ENCODE measurements at regions of chr11 and their contacts with region 1.

Region 1: GRCh38 chr11:30855383-30856006 is 269.3 kb upstream of the MPPED2 start:
- DNase-seq: peak; percentile 2
- ATAC-seq: no peak
- H3K4me3 ChIP-seq: no peak overlapping the region
- H3K27ac ChIP-seq: no peak overlapping the region
- H3K4me1 ChIP-seq: no peaks in the 10 kb centered on the region
- H3K27me3 ChIP-seq: no peaks in the 10 kb centered on the region
- CTCF ChIP-seq: peak; percentile 23
- EP300 ChIP-seq: no peak
- POLR2A ChIP-seq: no peak
- RAD21 ChIP-seq: no peak

Region 2: GRCh38 chr11:30346068-30346688 is 509.3 kb before region 1 on chr11:
- CTCF ChIA-PET with region 1: interaction called, 12 read pairs
- POLR2A ChIA-PET with region 1: no interaction called
- in situ Hi-C with region 1: loop called (anchors 10 kb)
- intact Hi-C with region 1: no loop called
- DNase-seq: peak; percentile 52
- ATAC-seq: peak; percentile 69
- H3K4me3 ChIP-seq: no peak overlapping the region
- H3K27ac ChIP-seq: no peak overlapping the region
- H3K4me1 ChIP-seq: no peaks in the 10 kb centered on the region
- H3K27me3 ChIP-seq: peaks cover 0 to 2% of the 10 kb centered on the region in 2 experiments; a peak in 1 of 5 replicates
- CTCF ChIP-seq: peak; percentile 60
- EP300 ChIP-seq: no peak
- POLR2A ChIP-seq: no peak
- RAD21 ChIP-seq: 0 out of 2 replicates have a peak, but pooled peaks have one; percentile 17

Region 3: DNA sequence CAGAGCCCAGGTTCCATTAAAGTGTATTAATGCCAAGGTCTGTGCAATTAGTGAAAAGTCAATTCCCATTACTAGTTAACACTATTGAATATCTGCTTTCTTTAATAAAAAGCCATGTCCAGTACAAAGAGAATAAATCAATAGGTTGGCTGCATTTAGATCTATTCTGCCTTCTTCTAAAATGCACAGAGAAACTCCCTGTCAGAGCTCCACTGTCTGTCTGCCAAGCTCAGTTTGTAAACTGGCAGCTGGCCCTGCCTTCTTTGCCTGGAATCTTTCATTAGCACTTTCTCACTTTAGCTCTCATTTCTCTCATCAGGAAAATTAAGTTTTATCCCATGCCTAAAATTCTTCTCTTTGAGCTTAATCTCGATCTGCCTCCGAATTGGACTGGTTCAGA is 497.0 kb before region 1 on chr11:
- CTCF ChIA-PET with region 1: no interaction called
- POLR2A ChIA-PET with region 1: no interaction called
- in situ Hi-C with region 1: loop called (anchors 10 kb)
- intact Hi-C with region 1: no loop called
- DNase-seq: no peak
- ATAC-seq: no peak
- H3K4me3 ChIP-seq: no peak overlapping the region
- H3K27ac ChIP-seq: no peak overlapping the region
- H3K4me1 ChIP-seq: no peaks in the 10 kb centered on the region
- H3K27me3 ChIP-seq: no peaks in the 10 kb centered on the region
- CTCF ChIP-seq: no peak
- EP300 ChIP-seq: no peak
- POLR2A ChIP-seq: no peak
- RAD21 ChIP-seq: no peak

Region 4: GRCh38 chr11:30586251-30587144 is 269.0 kb before region 1 on chr11 and contains the start of gene MPPED2:
- CTCF ChIA-PET with region 1: no interaction called
- POLR2A ChIA-PET with region 1: no interaction called
- in situ Hi-C with region 1: no loop called
- intact Hi-C with region 1: no loop called
- DNase-seq: no peak
- ATAC-seq: peak; percentile 99
- H3K4me3 ChIP-seq: peak within 1 kb of the TSS; percentile 48 to 66 (median 52); a peak in 5 of 6 replicates
- H3K27ac ChIP-seq: no peak within 1 kb of the TSS
- H3K4me1 ChIP-seq: peaks cover 4% of the 10 kb centered on the region; the same call in 1 of the 2 replicates
- H3K27me3 ChIP-seq: peaks cover 9 to 30% of the 10 kb centered on the region in 2 experiments; a peak in 4 of 5 replicates
- CTCF ChIP-seq: no peak; the same call in 1 of the 2 replicates
- EP300 ChIP-seq: no peak
- POLR2A ChIP-seq: no peak
- RAD21 ChIP-seq: 0 out of 2 replicates have a peak, but pooled peaks have one; percentile 20
- total RNA-seq, gene MPPED2: not detected in 2 replicates

Region 5: GRCh38 chr11:31045335-31045734 is 189.8 kb after region 1 on chr11:
- CTCF ChIA-PET with region 1: no interaction called
- POLR2A ChIA-PET with region 1: no interaction called
- in situ Hi-C with region 1: no loop called
- intact Hi-C with region 1: no loop called
- DNase-seq: peak; percentile 27
- ATAC-seq: no peak
- H3K4me3 ChIP-seq: no peak overlapping the region
- H3K27ac ChIP-seq: no peak overlapping the region
- H3K4me1 ChIP-seq: 0 out of 2 replicates have a peak, but pooled peaks cover 8% of the 10 kb centered on the region
- H3K27me3 ChIP-seq: no peaks in the 10 kb centered on the region
- CTCF ChIP-seq: peak; percentile 50
- EP300 ChIP-seq: no peak
- POLR2A ChIP-seq: no peak
- RAD21 ChIP-seq: peak; percentile 16; the same call in 1 of the 2 replicates

Region 6: DNA sequence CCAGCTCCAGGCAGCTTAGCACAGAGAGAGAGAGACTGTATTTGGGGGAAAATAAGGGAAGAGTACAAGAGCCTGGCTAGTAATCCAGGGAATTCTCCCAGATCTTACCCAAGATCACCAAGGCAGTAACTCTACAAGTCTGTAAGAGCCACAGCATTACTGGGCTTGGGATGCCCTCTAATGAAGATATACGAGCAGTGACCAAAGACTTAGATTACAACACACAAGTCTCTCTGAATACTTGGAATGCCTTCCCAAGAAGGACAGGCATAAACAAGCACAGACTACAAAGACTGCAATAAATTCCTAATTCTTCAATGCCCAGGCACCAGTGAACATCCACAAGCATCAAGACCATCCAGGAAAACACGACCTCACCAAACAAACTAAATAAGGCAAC is 531.9 kb after region 1 on chr11:
- CTCF ChIA-PET with region 1: no interaction called
- POLR2A ChIA-PET with region 1: no interaction called
- in situ Hi-C with region 1: no loop called
- intact Hi-C with region 1: no loop called
- DNase-seq: no peak
- ATAC-seq: no peak
- H3K4me3 ChIP-seq: no peak overlapping the region
- H3K27ac ChIP-seq: no peak overlapping the region
- H3K4me1 ChIP-seq: no peaks in the 10 kb centered on the region
- H3K27me3 ChIP-seq: no peaks in the 10 kb centered on the region
- CTCF ChIP-seq: no peak
- EP300 ChIP-seq: no peak
- POLR2A ChIP-seq: no peak
- RAD21 ChIP-seq: no peak